ENCODE measurements at regions of chr11 and their contacts with region 1.

Region 1: DNA sequence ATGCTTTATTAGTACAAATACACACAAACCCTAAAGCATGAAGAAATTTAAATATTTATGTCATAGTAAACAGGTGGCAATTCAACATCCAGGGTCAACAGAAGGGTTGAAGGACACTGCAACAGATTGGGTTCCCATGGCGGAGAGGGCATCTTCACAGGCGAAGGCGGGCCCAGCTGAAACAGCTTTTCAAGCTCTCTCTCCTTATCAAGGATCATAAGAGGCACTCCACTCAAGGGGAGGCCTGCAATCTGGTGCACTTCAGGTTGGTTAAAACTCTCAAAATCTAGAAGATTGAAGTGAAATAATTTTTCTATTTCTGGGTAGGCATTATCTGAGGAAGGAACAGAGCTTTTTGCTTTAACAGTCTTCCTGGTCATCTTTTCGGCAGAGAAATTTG is 16.8 kb upstream of the SLC22A8 start:
- DNase-seq: no peak
- H3K4me3 ChIP-seq: no peak overlapping the region
- H3K27ac ChIP-seq: no peak overlapping the region
- H3K4me1 ChIP-seq: peaks cover 0 to 4% (median 0%) of the 10 kb centered on the region in 6 donors
- H3K27me3 ChIP-seq: peaks cover 0 to 23% (median 0%) of the 10 kb centered on the region in 7 donors
- CTCF ChIP-seq: no peak
- POLR2A ChIP-seq: no peak

Region 2: GRCh38 chr11:63080682-63081081 is 48.2 kb after region 1 on chr11:
- intact Hi-C with region 1: no loop called
- DNase-seq: no peak
- H3K4me3 ChIP-seq: no peak overlapping the region
- H3K27ac ChIP-seq: no peak overlapping the region
- H3K4me1 ChIP-seq: no peaks in the 10 kb centered on the region
- H3K27me3 ChIP-seq: peaks cover 0 to 42% (median 3%) of the 10 kb centered on the region in 7 donors
- CTCF ChIP-seq: no peak
- POLR2A ChIP-seq: no peak

Region 3: DNA sequence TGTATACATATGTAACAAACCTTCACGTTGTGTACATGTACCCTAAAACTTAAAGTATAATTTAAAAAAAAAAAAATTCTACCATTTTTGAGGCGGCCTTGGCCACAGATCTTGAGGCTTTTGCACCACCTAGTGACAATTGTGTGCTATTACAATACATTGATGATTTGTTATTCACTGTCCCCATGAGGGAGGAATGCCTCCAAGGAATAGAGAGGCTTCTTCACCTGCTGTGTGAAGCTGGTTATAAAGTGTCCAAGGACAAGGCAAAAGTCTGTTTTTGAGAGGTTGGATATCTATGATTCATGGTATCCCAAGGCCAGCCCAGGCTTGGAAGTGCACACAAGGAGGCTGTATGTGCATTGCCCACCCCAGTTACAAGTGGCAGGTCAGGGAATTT is 180.3 kb after region 1 on chr11:
- intact Hi-C with region 1: loop called (anchors 10 kb)
- DNase-seq: no peak
- H3K4me3 ChIP-seq: no peak overlapping the region
- H3K27ac ChIP-seq: no peak overlapping the region
- H3K4me1 ChIP-seq: peaks cover 0 to 4% (median 0%) of the 10 kb centered on the region in 6 donors
- H3K27me3 ChIP-seq: peaks cover 0 to 17% (median 0%) of the 10 kb centered on the region in 7 donors
- CTCF ChIP-seq: peak in 8 of 11 experiments; percentile 25 to 66 (median 46)
- POLR2A ChIP-seq: no peak